ENCODE measurements at regions of chr18 and their contacts with region 1.

Region 1: DNA sequence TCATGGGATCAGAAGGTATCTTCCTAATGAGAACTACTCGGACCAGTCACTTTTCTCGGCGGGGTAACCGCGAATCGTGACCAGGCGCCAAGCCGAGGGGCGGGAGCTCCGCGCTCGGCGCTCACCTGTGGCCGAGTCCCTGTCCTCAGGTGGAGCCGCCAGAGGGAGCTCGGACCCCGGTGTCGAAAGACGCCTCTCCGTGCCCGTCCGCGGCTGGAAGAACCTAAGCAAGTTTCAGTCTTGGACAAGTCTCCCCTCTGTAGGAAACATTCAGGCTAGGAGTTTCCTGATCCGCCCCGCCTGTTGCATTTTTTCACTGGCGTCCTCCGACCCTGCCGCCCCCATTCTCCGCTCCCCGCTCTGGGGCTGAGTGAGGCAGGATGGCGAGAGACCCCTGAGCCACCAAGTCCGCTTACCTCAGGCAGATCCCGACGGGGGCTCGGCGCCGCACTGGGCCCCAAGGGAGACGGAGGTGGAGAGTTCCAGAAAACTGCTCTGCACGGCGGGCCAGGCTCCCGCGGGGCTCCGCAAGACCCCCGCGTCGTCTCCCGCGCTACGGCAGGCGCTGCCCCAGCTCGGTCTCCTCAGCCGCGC is 478 bp downstream of the DSEL start:
- DNase-seq: peak; percentile 93
- ATAC-seq: peak; percentile 59
- H3K4me3 Mint-ChIP-seq: peak overlapping the region; percentile 94
- H3K27ac Mint-ChIP-seq: 0 out of 2 replicates have a peak overlapping the region, but pooled peaks have one; percentile 71
- H3K4me1 Mint-ChIP-seq: peaks cover 76% of the 10 kb centered on the region
- H3K27me3 Mint-ChIP-seq: no peaks in the 10 kb centered on the region
- CTCF ChIP-seq: peak; percentile 52

Region 2: GRCh38 chr18:67417864-67418523 is 98.0 kb before region 1 on chr18:
- CTCF ChIA-PET with region 1: no interaction called
- POLR2A ChIA-PET with region 1: no interaction called
- DNase-seq: no peak
- ATAC-seq: no peak
- H3K4me3 Mint-ChIP-seq: no peak overlapping the region
- H3K27ac Mint-ChIP-seq: no peak overlapping the region
- H3K4me1 Mint-ChIP-seq: no peaks in the 10 kb centered on the region
- H3K27me3 Mint-ChIP-seq: no peaks in the 10 kb centered on the region
- CTCF ChIP-seq: no peak

Region 3: GRCh38 chr18:67504739-67505138 is 11.3 kb before region 1 on chr18:
- CTCF ChIA-PET with region 1: interaction called, 10 read pairs
- POLR2A ChIA-PET with region 1: no interaction called
- DNase-seq: no peak
- ATAC-seq: peak; percentile 71
- H3K4me3 Mint-ChIP-seq: no peak overlapping the region
- H3K27ac Mint-ChIP-seq: no peak overlapping the region
- H3K4me1 Mint-ChIP-seq: peaks cover 40% of the 10 kb centered on the region
- H3K27me3 Mint-ChIP-seq: no peaks in the 10 kb centered on the region
- CTCF ChIP-seq: no peak

Region 4: GRCh38 chr18:67710639-67711038 is 194.6 kb after region 1 on chr18:
- CTCF ChIA-PET with region 1: interaction called, 71 read pairs
- POLR2A ChIA-PET with region 1: interaction called, 4 read pairs
- DNase-seq: peak; percentile 68
- ATAC-seq: peak; percentile 92
- H3K4me3 Mint-ChIP-seq: no peak overlapping the region
- H3K27ac Mint-ChIP-seq: no peak overlapping the region
- H3K4me1 Mint-ChIP-seq: peaks cover 23% of the 10 kb centered on the region
- H3K27me3 Mint-ChIP-seq: no peaks in the 10 kb centered on the region
- CTCF ChIP-seq: peak; percentile 53